Breast epithelium (tissue), 4 donors: ENCODE measurements at regions of chr5 and their contacts with region 1.

Region 1: GRCh38 chr5:128782446-128782845 is 182.8 kb upstream of the SLC27A6 start:
- DNase-seq: peak; percentile 62 to 79
- H3K4me3 ChIP-seq: no peak overlapping the region
- H3K27ac ChIP-seq: peak overlapping the region; percentile 68 to 69
- H3K4me1 ChIP-seq: no peaks in the 10 kb centered on the region
- H3K27me3 ChIP-seq: no peaks in the 10 kb centered on the region
- CTCF ChIP-seq: no peak
- POLR2A ChIP-seq: no peak

Region 2: GRCh38 chr5:128695791-128696530 is 86.5 kb before region 1 on chr5:
- intact Hi-C with region 1: no loop called
- DNase-seq: no peak
- H3K4me3 ChIP-seq: no peak overlapping the region
- H3K27ac ChIP-seq: no peak overlapping the region
- H3K4me1 ChIP-seq: no peaks in the 10 kb centered on the region
- H3K27me3 ChIP-seq: no peaks in the 10 kb centered on the region
- CTCF ChIP-seq: no peak
- POLR2A ChIP-seq: no peak

Region 3: DNA sequence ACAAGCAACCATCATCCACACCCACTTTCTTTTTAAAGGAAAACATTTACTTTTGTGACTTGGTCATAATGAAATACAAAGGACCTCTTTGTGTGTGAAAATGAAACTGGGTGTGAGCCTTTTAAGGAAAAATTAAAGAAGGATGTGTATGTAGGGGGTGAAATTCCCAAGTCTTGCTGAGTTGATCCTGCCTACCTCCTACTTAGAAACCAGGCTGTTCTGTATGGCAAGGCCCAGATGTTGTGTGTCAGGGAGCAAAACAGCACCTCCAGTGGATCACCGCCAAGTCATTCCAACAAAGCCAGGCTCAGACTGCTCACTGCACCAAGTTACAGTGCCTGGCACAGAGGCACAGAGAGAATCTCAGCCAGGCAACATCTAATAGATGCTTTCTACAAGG is 45.9 kb before region 1 on chr5:
- intact Hi-C with region 1: loop called (anchors 2 kb)
- DNase-seq: peak in 1 of 2 donors; percentile 62
- H3K4me3 ChIP-seq: no peak overlapping the region
- H3K27ac ChIP-seq: peak overlapping the region; percentile 63 to 68
- H3K4me1 ChIP-seq: no peaks in the 10 kb centered on the region
- H3K27me3 ChIP-seq: no peaks in the 10 kb centered on the region
- CTCF ChIP-seq: no peak
- POLR2A ChIP-seq: no peak

Region 4: GRCh38 chr5:128800377-128800776 is 17.9 kb after region 1 on chr5:
- intact Hi-C with region 1: no loop called
- DNase-seq: no peak
- H3K4me3 ChIP-seq: no peak overlapping the region
- H3K27ac ChIP-seq: no peak overlapping the region
- H3K4me1 ChIP-seq: no peaks in the 10 kb centered on the region
- H3K27me3 ChIP-seq: no peaks in the 10 kb centered on the region
- CTCF ChIP-seq: no peak
- POLR2A ChIP-seq: no peak

Region 5: GRCh38 chr5:128815201-128815600 is 32.8 kb after region 1 on chr5:
- intact Hi-C with region 1: no loop called
- DNase-seq: no peak
- H3K4me3 ChIP-seq: no peak overlapping the region
- H3K27ac ChIP-seq: no peak overlapping the region
- H3K4me1 ChIP-seq: no peaks in the 10 kb centered on the region
- H3K27me3 ChIP-seq: no peaks in the 10 kb centered on the region
- CTCF ChIP-seq: no peak
- POLR2A ChIP-seq: no peak